Stomach (tissue), 19 donors: ENCODE measurements at regions of chrX and their contacts with region 1.

Region 1: DNA sequence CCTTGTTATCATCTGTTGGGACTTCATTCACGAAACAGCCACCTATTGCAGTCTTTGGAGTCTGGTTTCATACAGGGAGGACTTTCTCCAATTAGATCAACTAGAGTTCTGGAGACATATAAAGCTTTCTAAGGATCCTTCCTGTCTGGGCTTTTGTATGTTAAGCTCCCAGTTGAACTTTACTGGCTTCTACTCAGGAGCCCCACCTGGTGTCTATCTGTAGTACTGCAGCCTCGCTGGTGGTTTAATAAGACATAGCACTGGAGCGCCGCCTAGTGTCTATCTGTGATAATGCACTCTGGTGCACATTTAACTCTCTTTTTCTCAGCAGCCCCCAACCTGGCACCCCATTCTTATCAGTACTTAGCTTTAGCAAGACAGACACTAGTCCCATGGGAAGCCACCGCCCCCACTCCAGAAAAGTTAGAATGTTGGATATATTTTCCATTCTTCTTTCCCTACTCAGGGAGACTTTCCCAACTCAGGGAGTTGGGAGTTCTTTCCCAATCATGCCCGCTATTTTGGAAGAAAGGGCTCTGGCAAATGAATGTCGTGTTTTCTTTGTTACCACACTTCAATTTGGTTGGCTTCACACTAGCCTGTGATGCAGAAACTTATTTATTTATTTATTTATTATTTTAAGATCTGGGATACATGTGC is 36.9 kb upstream of the SYTL4 start:
- DNase-seq: peak; percentile 84 to 95
- H3K4me3 ChIP-seq: no peak overlapping the region
- H3K27ac ChIP-seq: no peak overlapping the region
- H3K4me1 ChIP-seq: no peaks in the 10 kb centered on the region
- H3K27me3 ChIP-seq: peaks cover 0 to 3% (median 0%) of the 10 kb centered on the region in 3 donors
- CTCF ChIP-seq: peak in 6 of 7 experiments; percentile 47 to 99 (median 98)
- EP300 ChIP-seq: no peak
- POLR2A ChIP-seq: no peak

Region 2: DNA sequence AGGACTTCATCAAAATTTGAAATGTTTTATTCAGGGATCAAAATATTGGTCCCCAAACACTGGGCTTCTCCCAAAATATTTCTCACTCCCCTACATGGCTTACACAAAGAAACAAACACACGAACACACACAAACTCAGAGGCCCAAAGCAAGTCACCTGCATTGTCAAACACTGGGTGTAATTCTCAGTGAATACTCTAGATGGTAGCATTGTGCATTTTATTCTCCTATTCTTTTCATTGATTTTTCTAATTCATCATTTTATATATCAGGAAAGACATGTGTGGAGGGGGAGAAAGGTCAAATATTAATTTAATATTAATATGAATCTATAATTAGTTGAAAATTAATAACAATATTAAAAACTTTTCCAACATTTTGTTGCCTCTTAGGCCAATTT is 256.3 kb before region 1 on chrX:
- intact Hi-C with region 1: loop called (anchors 10 kb)
- DNase-seq: peak in 1 of 2 donors; percentile 21
- H3K4me3 ChIP-seq: no peak overlapping the region
- H3K27ac ChIP-seq: no peak overlapping the region
- H3K4me1 ChIP-seq: no peaks in the 10 kb centered on the region
- H3K27me3 ChIP-seq: no peaks in the 10 kb centered on the region
- CTCF ChIP-seq: peak in 4 of 7 experiments; percentile 34 to 76 (median 62)
- EP300 ChIP-seq: no peak
- POLR2A ChIP-seq: no peak

Region 3: DNA sequence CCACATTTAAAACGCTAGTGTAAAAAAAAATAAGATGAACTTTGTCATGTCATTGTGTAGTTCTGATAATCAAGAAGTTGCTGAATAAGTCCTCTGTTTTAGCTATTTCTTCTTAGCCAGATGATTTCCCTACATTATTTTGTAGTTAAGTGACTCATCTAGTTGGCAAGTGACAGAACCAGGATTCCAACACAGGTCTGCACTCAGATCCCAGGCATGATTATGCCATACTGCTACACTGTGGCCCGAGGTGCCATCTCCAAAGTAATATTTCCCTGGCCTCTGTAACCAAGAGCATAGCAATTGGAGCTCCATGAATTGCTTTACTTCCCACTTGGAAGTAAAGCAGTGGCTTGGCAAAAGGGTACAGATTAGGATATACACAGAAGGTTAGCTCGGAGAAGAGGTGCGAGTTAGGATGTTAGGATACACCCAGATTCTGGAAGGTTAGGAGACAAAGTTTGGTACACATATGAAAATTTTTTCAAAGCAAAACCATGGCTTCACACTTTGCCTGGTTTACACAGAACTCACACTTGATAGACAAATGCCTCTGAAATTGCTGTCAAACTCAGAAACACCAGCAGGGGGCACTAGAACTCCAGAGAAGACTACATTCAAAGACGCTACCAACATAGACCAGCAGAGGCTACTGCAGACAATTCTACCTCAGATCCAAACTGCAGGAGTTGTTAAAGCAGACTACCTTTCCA is 83.4 kb before region 1 on chrX:
- intact Hi-C with region 1: loop called (anchors 5 kb)
- DNase-seq: peak; percentile 77 to 87
- H3K4me3 ChIP-seq: no peak overlapping the region
- H3K27ac ChIP-seq: no peak overlapping the region
- H3K4me1 ChIP-seq: no peaks in the 10 kb centered on the region
- H3K27me3 ChIP-seq: no peaks in the 10 kb centered on the region
- CTCF ChIP-seq: peak in 5 of 7 experiments; percentile 68 to 93 (median 82)
- EP300 ChIP-seq: no peak
- POLR2A ChIP-seq: no peak

Region 4: DNA sequence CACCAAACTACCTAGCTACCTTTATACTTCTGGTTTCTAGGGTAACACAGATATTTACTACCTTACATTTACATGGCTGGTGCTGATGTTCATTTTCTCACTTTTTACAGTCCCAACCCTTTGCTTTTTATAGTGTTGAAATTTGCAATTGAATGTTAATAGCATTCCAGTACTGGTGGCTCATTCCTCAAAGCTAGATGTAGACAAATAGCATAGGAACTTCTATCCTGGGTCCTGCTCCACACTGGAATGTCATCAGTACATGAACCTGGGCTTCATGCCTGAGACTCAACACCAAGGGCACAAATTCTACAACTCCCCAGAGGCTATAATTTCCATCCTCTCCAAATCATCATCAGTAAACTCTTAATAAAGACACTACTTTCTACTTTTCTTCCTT is 293.4 kb after region 1 on chrX:
- intact Hi-C with region 1: no loop called
- DNase-seq: no peak
- H3K4me3 ChIP-seq: no peak overlapping the region
- H3K27ac ChIP-seq: no peak overlapping the region
- H3K4me1 ChIP-seq: no peaks in the 10 kb centered on the region
- H3K27me3 ChIP-seq: peaks cover 0 to 3% (median 0%) of the 10 kb centered on the region in 3 donors
- CTCF ChIP-seq: no peak
- EP300 ChIP-seq: no peak
- POLR2A ChIP-seq: no peak